ENCODE measurements at regions of chr2 and their contacts with region 1.

Region 1: DNA sequence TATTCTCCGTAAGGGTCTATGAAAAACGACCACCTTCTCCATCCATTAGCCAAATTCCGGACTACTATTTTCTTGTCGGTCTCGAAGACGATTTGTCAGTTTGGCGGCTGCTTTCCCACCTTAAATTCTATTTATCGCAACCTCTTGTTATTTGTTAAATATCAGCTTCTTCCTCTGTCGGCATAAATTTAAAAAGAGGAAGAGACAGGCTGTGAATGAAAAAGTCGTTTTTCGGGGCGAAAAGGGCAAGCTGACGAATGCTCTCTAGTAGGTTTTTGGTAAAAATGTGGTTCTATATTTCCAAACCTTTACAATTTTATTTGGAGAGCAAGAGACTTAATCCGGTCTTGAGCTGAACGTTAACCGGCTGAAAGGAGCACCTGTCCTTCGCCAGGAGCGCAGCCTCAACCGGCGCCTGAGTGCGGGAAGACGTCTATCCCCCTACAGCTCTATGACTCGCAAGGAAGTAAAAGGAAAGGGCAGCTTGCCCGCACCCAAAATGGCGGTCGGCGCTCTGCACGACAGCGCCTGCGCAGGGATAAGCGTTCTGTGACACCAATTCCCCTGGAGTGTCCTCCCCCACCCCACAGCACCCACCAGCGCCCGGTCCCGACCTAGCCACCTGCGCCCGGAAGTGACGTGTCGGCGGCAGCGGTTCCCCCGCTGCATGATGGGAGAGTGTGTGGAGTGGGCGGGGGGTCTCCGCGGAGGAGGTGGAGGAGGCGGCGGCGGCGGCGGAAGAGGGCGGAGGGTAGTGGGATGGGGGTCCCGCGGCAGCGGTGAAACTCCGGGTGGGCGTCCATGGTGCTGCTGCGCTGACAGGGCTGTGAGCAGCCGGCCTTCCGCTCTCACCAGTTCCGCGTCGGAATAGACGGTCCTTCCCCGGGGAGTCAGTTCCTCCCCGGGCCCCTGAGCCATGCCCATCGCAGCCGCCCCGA is at the start of gene AFTPH:
- DNase-seq: peak; percentile 98 to 99
- H3K4me3 ChIP-seq: peak within 1 kb of the TSS; percentile 67
- H3K27ac ChIP-seq: peak within 1 kb of the TSS; percentile 72
- H3K4me1 ChIP-seq: peaks cover 18% of the 10 kb centered on the region
- H3K27me3 ChIP-seq: no peaks in the 10 kb centered on the region
- CTCF ChIP-seq: no peak
- total RNA-seq, gene AFTPH: 34.4 and 40.5 TPM in 2 replicates

Region 2: GRCh38 chr2:64203858-64204632 is 319.9 kb before region 1 on chr2:
- CTCF ChIA-PET with region 1: interaction called, 18 read pairs
- POLR2A ChIA-PET with region 1: no interaction called
- intact Hi-C with region 1: no loop called
- DNase-seq: peak; percentile 71 to 97
- H3K4me3 ChIP-seq: peak overlapping the region; percentile 40; the same call in 1 of the 2 replicates
- H3K27ac ChIP-seq: peak overlapping the region; percentile 93
- H3K4me1 ChIP-seq: peaks cover 45% of the 10 kb centered on the region
- H3K27me3 ChIP-seq: no peaks in the 10 kb centered on the region
- CTCF ChIP-seq: no peak

Region 3: DNA sequence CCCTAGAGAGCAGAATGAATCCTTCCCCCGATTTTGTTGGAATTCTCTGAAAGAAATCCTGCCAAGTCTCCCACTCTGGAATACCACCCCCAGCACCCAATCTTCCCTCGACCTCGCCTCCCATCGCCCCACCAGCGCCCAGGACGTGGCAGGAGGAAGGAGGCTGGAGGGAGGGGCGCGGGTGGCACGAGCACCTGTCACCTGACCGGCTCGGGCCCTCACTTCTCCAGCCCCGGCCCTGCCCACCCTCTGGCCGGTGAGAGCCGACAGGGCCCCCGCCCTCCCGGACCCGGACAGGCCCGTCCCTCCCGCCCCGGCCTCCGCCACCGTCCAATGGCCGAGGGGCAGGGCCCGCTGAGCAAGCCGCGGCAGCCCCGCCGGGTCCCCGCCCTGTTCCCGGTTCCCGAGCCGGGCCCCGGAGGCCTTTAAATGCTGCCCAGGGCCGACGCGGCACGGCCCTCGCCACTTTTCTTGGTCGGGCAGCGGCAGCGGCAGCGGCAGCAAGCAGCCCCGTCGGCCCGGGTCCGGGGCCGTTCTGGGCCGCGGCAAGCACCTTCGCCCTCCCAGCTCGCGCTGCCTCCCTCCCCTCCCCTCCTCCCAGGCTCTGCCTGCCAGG is 70.1 kb before region 1 on chr2 and contains the start of gene LGALSL:
- CTCF ChIA-PET with region 1: no interaction called
- POLR2A ChIA-PET with region 1: no interaction called
- intact Hi-C with region 1: loop called (anchors 2 kb)
- DNase-seq: peak; percentile 71 to 88
- H3K4me3 ChIP-seq: peak within 1 kb of the TSS; percentile 65
- H3K27ac ChIP-seq: peak within 1 kb of the TSS; percentile 99
- H3K4me1 ChIP-seq: peaks cover 22% of the 10 kb centered on the region
- H3K27me3 ChIP-seq: no peaks in the 10 kb centered on the region
- CTCF ChIP-seq: no peak
- total RNA-seq, gene LGALSL: 9.7 and 13.0 TPM in 2 replicates

Region 4: GRCh38 chr2:64562148-64562784 is 38.3 kb after region 1 on chr2:
- CTCF ChIA-PET with region 1: interaction called, 4 read pairs
- POLR2A ChIA-PET with region 1: no interaction called
- intact Hi-C with region 1: loop called (anchors 2 kb)
- DNase-seq: no peak
- H3K4me3 ChIP-seq: no peak overlapping the region
- H3K27ac ChIP-seq: no peak overlapping the region
- H3K4me1 ChIP-seq: no peaks in the 10 kb centered on the region
- H3K27me3 ChIP-seq: no peaks in the 10 kb centered on the region
- CTCF ChIP-seq: peak; percentile 69

Region 5: DNA sequence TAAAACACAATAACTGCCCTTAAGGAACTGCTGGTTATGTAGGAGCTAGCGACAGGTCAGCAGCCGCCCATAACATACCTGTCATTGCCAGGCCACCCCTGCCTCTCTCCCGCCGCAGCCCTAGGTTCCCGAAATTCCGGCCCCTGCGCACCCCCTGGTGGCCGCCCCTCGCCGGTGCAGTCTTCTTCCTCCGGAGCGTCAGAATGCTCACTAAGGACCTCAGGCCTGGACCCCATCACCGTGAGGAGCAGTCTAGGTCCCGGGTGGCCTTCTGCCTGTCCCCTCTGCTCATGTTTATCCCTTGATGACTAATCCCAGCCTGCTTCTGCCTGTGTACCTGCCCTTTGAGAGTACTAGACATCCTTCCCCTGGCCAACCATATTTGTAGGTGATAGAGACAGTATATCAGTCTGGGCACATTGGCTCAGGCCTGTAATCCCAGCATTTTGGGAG is 349.6 kb after region 1 on chr2:
- CTCF ChIA-PET with region 1: interaction called, 3 read pairs
- POLR2A ChIA-PET with region 1: no interaction called
- intact Hi-C with region 1: loop called (anchors 1 kb)
- DNase-seq: peak; percentile 66 to 88
- H3K4me3 ChIP-seq: no peak overlapping the region
- H3K27ac ChIP-seq: no peak overlapping the region
- H3K4me1 ChIP-seq: peaks cover 26% of the 10 kb centered on the region
- H3K27me3 ChIP-seq: no peaks in the 10 kb centered on the region
- CTCF ChIP-seq: peak; percentile 99

Region 6: DNA sequence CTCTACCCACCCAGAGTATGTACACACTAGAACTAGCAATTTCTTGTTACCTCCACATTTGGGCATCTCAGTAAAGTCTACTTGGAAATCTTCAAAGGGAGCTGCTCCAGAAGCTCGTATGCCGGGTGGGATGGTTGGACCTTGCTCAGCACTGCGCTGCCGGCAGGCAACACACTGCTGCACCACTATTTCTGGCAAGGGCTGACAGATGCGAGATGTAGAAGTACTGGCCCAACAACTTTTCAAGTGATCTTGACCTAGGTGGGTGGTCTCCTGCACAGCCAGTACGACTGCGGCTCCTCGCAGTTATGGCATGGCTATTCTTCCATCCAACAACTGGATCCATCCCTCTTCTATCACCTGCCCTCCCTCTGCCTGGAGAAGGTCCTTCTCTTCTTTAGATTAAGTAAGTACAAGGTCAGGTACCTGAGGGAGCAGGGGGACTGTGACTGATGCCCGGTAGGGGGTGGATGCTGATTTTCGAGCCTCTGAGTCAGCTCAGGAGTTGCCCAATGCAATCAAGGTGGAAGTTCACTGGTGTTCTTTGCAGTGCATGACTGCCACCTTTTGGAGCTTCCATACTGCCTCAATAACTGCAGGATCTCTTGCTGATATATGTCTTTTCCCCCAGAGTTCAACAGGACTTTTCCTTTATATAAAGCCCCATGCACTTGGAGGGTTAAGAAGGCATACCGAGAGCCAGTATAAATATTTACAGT is 364.8 kb after region 1 on chr2:
- CTCF ChIA-PET with region 1: interaction called, 6 read pairs
- POLR2A ChIA-PET with region 1: no interaction called
- intact Hi-C with region 1: loop called (anchors 1 kb)
- DNase-seq: peak; percentile 80 to 92
- H3K4me3 ChIP-seq: no peak overlapping the region
- H3K27ac ChIP-seq: no peak overlapping the region
- H3K4me1 ChIP-seq: peaks cover 8% of the 10 kb centered on the region
- H3K27me3 ChIP-seq: no peaks in the 10 kb centered on the region
- CTCF ChIP-seq: peak; percentile 79

Measured in PC-9 (cell line).